ENCODE measurements at regions of chr1 and their contacts with region 1.

Region 1: DNA sequence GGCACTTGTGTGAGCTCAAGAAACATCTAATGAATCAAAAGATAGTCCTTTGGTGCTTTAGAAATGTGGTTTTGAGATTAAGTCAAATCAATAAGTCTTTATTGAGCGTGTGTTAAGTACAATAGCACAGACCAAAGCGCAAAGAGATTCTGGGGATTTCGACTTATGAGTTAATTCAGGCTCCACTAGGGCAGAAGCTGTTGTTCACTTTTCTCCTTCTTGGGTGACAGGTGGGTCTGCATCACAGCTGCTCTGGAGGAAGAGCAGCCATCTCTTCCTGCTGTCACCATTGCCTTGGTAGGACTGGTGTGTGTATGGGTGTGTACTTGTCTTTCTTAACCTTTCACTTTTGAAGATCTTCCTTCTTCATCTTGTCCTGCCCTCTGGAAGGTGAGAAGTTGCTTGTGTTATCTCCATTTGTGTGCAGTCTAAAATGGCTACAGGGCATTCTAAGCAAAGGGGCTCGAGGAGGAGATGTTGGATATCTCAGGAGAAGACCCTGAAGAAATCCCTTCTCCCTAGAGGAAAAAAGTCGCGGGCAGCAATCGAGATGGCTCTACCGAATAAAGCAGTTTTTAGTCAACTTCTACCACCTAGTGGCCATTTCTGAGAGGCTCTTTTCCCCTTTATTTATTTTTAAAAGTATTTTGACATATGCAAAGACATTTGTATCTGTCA is 22.9 kb upstream of the DISC1 start:
- DNase-seq: peak; percentile 58
- H3K4me3 Mint-ChIP-seq: peak overlapping the region; percentile 81
- H3K27ac Mint-ChIP-seq: peak overlapping the region; percentile 17
- H3K4me1 Mint-ChIP-seq: peaks cover 9% of the 10 kb centered on the region
- H3K27me3 Mint-ChIP-seq: peaks cover 13% of the 10 kb centered on the region
- CTCF ChIP-seq: peak; percentile 66

Region 2: DNA sequence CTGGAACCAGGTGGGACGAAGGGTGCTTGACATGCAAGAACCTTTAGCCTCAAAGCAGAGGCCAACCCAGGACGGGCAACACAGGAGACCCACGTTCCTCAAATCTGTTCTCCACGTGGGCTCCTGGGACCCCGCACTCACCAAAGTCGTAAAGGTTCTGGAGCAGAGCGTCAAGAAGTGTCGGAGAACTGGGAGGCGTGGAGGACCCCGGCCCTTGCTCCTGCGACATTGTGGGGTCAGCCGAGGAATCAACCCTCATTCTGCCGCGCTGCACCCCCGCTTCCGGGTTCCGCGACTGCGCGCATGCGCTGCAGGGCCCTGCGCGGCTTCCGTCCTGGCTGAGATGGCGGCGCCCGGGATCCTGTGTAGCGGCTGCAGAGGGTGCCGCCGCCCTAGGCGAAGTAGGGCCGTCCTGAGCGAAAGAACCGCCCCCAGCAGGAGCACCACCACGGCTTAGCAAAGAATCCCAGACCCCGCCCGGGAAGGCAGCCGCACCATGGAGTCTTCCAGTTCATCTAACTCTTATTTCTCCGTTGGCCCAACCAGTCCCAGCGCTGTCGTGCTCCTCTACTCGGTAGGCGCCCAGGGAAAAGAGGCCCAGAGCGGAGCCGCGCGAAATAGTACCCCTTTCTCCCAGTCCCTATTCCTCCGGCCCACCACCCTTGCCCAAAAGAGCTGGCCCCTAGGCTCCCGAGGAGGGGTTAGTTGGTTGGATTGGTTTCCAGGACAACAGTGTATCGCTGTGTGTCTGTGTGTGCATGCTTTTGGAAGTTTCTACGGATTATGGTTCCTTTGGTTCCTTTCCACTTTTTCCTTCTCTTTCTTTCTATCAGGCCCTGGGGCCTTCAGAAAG is 362.6 kb before region 1 on chr1 and contains the start of gene GNPAT:
- CTCF ChIA-PET with region 1: no interaction called
- intact Hi-C with region 1: loop called (anchors 5 kb)
- DNase-seq: peak; percentile 94
- H3K4me3 Mint-ChIP-seq: peak within 1 kb of the TSS; percentile 94
- H3K27ac Mint-ChIP-seq: peak within 1 kb of the TSS; percentile 87
- H3K4me1 Mint-ChIP-seq: peaks cover 46% of the 10 kb centered on the region
- H3K27me3 Mint-ChIP-seq: no peaks in the 10 kb centered on the region
- CTCF ChIP-seq: no peak
- total RNA-seq, gene GNPAT: 44.5 and 52.7 TPM in 2 replicates

Region 3: DNA sequence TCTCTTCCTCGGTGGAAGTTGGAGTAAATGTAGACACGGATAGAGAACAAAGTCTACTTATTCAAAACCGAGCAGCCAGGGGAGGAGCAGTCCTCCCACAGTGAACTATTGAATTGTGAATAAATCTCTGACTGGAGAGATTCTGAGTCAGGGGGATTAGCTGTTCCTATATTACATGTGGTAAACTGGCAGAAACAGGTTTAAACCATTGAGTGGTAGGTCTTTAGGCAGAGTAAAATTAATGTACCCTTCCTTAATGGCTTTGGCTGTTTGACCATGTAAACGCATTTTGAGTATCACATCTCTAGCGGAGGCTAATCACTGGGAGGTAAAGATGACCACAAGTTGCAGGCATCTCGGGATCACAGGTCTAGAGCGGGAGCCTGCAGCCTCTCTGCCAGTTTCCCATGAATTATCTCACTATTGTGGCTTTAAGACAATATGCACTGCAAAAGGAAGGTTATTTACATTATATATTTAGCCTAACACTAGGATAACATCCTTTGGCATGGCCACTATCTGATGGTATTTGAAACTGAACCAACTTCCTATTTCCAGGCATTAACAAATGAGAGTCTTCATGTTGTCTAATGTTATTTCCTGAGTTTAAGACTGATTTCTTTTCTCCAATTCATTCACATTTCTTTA is 15.0 kb after region 1 on chr1:
- CTCF ChIA-PET with region 1: no interaction called
- intact Hi-C with region 1: no loop called
- DNase-seq: no peak
- H3K4me3 Mint-ChIP-seq: no peak overlapping the region
- H3K27ac Mint-ChIP-seq: no peak overlapping the region
- H3K4me1 Mint-ChIP-seq: no peaks in the 10 kb centered on the region
- H3K27me3 Mint-ChIP-seq: peaks cover 83% of the 10 kb centered on the region
- CTCF ChIP-seq: no peak

Region 4: DNA sequence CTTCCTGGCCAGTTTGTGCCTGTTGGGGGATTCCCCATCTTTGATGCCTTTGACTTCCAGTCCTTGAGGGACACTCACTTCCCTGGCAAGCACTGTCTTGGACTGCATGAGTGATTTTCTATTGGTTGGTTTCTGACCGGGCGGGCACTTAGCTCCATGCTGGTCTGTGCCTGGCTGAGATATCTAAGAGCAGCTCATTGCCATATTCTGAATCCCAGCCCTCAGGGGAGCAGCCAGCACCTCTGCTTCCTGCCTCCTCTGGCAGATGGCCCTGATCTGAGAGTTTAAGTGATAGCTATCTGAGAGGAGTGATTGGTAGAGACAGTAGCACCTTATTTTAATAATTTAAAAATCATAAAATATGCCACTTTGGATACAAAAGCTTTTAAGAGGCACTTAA is 75.4 kb after region 1 on chr1:
- CTCF ChIA-PET with region 1: no interaction called
- intact Hi-C with region 1: no loop called
- DNase-seq: no peak
- H3K4me3 Mint-ChIP-seq: no peak overlapping the region
- H3K27ac Mint-ChIP-seq: no peak overlapping the region
- H3K4me1 Mint-ChIP-seq: no peaks in the 10 kb centered on the region
- H3K27me3 Mint-ChIP-seq: no peaks in the 10 kb centered on the region
- CTCF ChIP-seq: no peak